Head of caudate nucleus (tissue), 42 donors: ENCODE measurements at regions of chr7 and their contacts with region 1.

Region 1: DNA sequence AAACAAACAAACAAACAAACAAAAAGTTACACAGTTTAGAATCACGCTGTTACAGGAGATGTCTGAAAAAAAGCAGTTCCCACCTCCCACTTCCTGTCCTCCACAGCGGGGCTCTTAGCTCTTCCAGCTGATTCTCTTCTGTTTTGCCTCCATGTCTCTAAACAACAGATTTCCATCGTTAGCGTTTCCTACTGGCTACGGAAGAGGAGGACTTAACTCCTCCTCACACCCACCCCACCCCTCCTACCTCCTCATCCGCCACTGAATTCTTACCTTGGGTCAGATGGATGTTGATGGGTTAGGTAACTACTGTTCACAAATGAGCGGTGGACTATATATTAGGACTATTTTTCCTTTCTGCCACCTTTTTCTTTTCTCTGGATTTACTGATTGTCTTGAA is 36.8 kb upstream of the NUB1 start:
- DNase-seq: no peak

Region 2: GRCh38 chr7:151244196-151244840 is 60.5 kb before region 1 on chr7:
- intact Hi-C with region 1: loop called (anchors 10 kb)
- DNase-seq: peak in 31 of 42 donors; percentile 47 to 86 (median 70)

Region 3: GRCh38 chr7:151408839-151409666 is 104.2 kb after region 1 on chr7:
- intact Hi-C with region 1: no loop called
- DNase-seq: no peak